ENCODE measurements at regions of chr7 and their contacts with region 1.

Region 1: DNA sequence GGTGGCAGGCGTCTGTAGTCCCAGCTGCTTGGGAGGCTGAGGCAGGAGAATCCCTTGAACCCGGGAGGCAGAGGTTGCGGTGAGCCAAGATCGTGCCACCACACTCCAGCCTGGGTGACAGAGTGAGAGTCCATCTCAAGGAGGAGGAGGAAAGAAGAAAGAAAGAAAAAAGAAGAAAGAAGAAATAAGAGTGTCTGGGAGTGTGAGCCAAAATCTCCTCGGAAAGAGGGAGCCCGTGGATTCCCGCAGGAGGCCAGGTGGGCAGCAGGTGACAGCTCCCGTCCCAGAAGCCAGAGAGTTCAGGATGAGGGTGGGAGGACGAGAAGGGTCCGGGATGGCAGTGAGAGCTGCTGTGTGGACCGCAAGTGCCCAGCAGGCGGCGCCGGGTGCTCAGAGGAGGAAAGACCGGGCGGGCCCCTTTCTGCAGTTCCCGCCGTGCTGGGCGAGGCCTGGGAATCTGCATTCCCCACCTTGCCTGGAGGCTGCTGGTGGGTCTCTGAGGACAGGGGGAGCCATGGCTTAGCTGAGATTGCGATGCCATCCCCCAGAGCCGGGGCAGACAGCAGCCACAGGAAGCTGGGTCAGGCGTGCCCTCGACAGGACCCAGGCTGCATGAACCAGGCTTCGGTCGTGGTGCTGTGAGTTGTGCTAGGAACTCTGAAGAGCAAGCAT is 17.1 kb upstream of the AMZ1 start:
- DNase-seq: peak; percentile 96
- H3K4me3 ChIP-seq: no peak overlapping the region; a peak in 1 of 4 replicates
- H3K27ac ChIP-seq: no peak overlapping the region
- H3K4me1 ChIP-seq: peaks cover 0 to 3% of the 10 kb centered on the region in 2 experiments; a peak in 1 of 4 replicates
- H3K27me3 ChIP-seq: no peaks in the 10 kb centered on the region
- CTCF ChIP-seq: peak; percentile 97
- EP300 ChIP-seq: no peak
- RAD21 ChIP-seq: peak; percentile 93

Region 2: GRCh38 chr7:2567679-2568278 is 103.1 kb before region 1 on chr7:
- CTCF ChIA-PET with region 1: interaction called, 12 read pairs
- POLR2A ChIA-PET with region 1: no interaction called
- DNase-seq: peak; percentile 69
- H3K4me3 ChIP-seq: no peak overlapping the region
- H3K27ac ChIP-seq: no peak overlapping the region
- H3K4me1 ChIP-seq: no peaks in the 10 kb centered on the region
- H3K27me3 ChIP-seq: no peaks in the 10 kb centered on the region
- CTCF ChIP-seq: peak; percentile 46
- EP300 ChIP-seq: no peak
- RAD21 ChIP-seq: peak; percentile 82

Region 3: DNA sequence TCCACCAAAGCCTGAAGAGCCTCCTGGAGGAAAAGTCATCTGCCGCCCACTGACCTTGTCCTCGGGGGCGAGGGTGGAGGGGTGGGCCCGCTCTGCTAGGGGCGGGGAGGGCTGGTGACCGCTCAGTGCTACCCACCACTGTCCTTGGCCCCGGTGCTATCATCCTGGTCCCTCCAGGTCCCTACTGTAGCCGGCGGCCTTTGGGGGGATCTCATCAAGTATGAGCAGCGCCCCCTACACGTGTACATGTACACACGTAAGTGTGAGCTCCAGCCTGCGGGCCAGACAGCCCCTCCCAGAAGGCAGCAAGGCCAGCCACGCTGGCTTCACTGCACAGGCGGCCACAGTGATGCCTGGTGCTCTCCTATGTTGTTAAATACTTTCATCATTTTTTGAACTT is 19.5 kb before region 1 on chr7:
- CTCF ChIA-PET with region 1: interaction called, 17 read pairs
- POLR2A ChIA-PET with region 1: no interaction called
- DNase-seq: no peak
- H3K4me3 ChIP-seq: no peak overlapping the region
- H3K27ac ChIP-seq: no peak overlapping the region
- H3K4me1 ChIP-seq: peaks cover 0 to 23% of the 10 kb centered on the region in 2 experiments; a peak in 1 of 4 replicates
- H3K27me3 ChIP-seq: no peaks in the 10 kb centered on the region
- CTCF ChIP-seq: peak; percentile 36
- EP300 ChIP-seq: no peak
- RAD21 ChIP-seq: no peak

Region 4: GRCh38 chr7:2680792-2681490 is 10.1 kb after region 1 on chr7:
- CTCF ChIA-PET with region 1: interaction called, 204 read pairs
- POLR2A ChIA-PET with region 1: no interaction called
- DNase-seq: peak; percentile 94
- H3K4me3 ChIP-seq: no peak overlapping the region; a peak in 1 of 4 replicates
- H3K27ac ChIP-seq: no peak overlapping the region
- H3K4me1 ChIP-seq: peaks cover 0 to 3% of the 10 kb centered on the region in 2 experiments; a peak in 1 of 4 replicates
- H3K27me3 ChIP-seq: peaks cover 11% of the 10 kb centered on the region; the same call in 1 of the 2 replicates
- CTCF ChIP-seq: peak; percentile 76
- EP300 ChIP-seq: no peak
- RAD21 ChIP-seq: peak; percentile 82

Region 5: GRCh38 chr7:2709553-2710285 is 38.9 kb after region 1 on chr7:
- CTCF ChIA-PET with region 1: interaction called, 49 read pairs
- POLR2A ChIA-PET with region 1: no interaction called
- DNase-seq: peak; percentile 62
- H3K4me3 ChIP-seq: no peak overlapping the region
- H3K27ac ChIP-seq: no peak overlapping the region
- H3K4me1 ChIP-seq: peaks cover 0 to 4% of the 10 kb centered on the region in 2 experiments; a peak in 1 of 4 replicates
- H3K27me3 ChIP-seq: no peaks in the 10 kb centered on the region
- CTCF ChIP-seq: peak; percentile 26
- EP300 ChIP-seq: no peak
- RAD21 ChIP-seq: peak; percentile 28

Region 6: DNA sequence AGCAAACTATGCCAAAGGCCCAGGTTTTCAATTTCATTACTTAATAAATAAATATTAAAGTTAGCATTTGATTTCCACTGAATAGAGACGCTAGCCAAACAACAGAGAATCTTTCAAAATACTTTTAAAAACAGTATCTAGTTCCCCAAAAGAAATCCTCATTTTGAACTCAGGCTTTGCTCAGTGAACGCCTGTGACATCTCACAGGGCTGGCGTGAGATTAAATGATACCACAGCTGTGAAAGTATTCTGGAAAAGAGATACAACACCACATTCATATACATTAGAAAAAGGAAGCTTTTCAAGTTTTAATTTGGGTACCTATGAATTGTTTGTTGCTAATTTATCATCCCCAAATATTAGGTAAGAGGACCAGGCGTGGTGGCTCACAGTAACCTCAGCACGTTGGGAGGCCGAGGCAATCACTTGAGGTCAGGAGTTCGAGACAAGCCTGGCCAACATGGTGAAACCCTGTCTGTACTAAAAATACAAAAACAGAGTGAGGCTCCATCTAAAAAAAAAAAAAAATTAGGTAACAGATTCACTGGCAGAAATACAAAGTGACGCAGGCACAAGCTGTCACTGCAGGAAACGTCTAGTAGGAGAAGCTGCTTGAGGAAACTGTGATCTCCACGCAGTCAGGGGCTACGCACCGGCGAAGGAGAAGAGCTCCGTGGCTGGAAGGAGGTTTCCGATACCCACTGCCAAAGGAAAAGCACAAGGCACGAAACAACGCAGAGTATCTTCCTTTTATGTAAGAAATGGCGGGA is 67.1 kb after region 1 on chr7:
- CTCF ChIA-PET with region 1: no interaction called
- POLR2A ChIA-PET with region 1: no interaction called
- DNase-seq: no peak
- H3K4me3 ChIP-seq: no peak overlapping the region
- H3K27ac ChIP-seq: no peak overlapping the region
- H3K4me1 ChIP-seq: peaks cover 0 to 14% of the 10 kb centered on the region in 2 experiments; a peak in 1 of 4 replicates
- H3K27me3 ChIP-seq: no peaks in the 10 kb centered on the region
- CTCF ChIP-seq: no peak
- EP300 ChIP-seq: no peak
- RAD21 ChIP-seq: no peak

Region 7: GRCh38 chr7:2820508-2820934 is 149.7 kb after region 1 on chr7:
- CTCF ChIA-PET with region 1: interaction called, 12 read pairs
- POLR2A ChIA-PET with region 1: no interaction called
- DNase-seq: no peak
- H3K4me3 ChIP-seq: no peak overlapping the region
- H3K27ac ChIP-seq: peak overlapping the region in 1 of 2 experiments; percentile 78; a peak in 2 of 4 replicates
- H3K4me1 ChIP-seq: peaks cover 15 to 27% of the 10 kb centered on the region in 2 experiments; a peak in 3 of 4 replicates
- H3K27me3 ChIP-seq: no peaks in the 10 kb centered on the region
- CTCF ChIP-seq: no peak
- EP300 ChIP-seq: peak in 1 of 2 experiments; percentile 67; a peak in 1 of 4 replicates
- RAD21 ChIP-seq: no peak

Measured in SK-N-SH (cell line).